Posterior vena cava (tissue), 2 donors: ENCODE measurements at regions of chr2 and their contacts with region 1.

Region 1: GRCh38 chr2:235864733-235865515 is 303.3 kb downstream of the GBX2 start:
- DNase-seq: no peak

Region 2: DNA sequence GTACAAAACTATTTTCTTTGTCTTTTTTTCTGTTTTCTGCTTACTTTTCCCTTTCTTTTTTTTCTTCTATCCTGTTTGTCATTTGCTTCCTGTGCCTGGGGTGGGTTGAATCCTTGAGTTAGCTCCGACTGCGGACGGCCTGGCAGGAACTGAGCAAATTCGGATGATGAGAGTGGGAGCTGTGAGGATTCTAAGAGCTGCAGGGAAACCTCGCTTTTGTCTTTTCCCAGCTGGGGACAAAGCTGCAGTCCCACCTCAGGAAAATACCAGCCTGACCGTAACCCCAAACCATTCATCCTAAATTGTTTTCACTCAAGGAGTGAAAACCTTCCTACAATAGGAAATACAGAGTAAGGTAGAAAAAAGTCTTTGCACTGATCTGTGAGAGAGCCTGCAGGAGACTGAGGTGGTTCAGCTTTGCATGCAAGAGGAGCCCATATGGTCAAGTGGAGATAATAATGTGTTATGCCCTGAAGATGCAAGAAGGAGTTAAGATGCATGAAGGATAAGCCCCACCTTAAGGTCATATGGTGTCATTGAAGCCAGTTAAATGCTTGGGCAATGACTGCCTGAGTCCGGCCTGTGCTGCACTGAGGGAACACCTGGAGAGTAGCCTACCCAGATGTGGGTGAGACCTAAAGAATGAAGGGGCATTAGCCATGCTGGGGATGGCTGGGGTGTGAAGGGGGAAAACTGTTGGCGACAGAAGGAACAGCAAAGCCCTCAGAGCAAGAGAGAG is 1336.3 kb before region 1 on chr2:
- intact Hi-C with region 1: loop called in 1 of 2 experiments (anchors 10 kb)
- DNase-seq: no peak